CD14-positive monocyte (primary cell): ENCODE measurements at regions of chr12 and their contacts with region 1.

Region 1: GRCh38 chr12:53220801-53221202 is 11.2 kb downstream of the RARG start:
- DNase-seq: peak; percentile 89 to 94 (median 93)
- H3K4me3 ChIP-seq: peak overlapping the region; percentile 68 to 97 (median 84)
- H3K4me3 Mint-ChIP-seq: peak overlapping the region; percentile 91 to 94
- H3K27ac ChIP-seq: peak overlapping the region; percentile 98 to 99
- H3K27ac Mint-ChIP-seq: peak overlapping the region; percentile 97 to 100 (median 99)
- H3K4me1 ChIP-seq: peaks cover 69 to 85% of the 10 kb centered on the region in 2 donors
- H3K4me1 Mint-ChIP-seq: peaks cover 75% of the 10 kb centered on the region
- H3K27me3 ChIP-seq: no peaks in the 10 kb centered on the region
- H3K27me3 Mint-ChIP-seq: peaks cover 3 to 18% (median 9%) of the 10 kb centered on the region in 3 donors
- CTCF ChIP-seq: no peak

Region 2: DNA sequence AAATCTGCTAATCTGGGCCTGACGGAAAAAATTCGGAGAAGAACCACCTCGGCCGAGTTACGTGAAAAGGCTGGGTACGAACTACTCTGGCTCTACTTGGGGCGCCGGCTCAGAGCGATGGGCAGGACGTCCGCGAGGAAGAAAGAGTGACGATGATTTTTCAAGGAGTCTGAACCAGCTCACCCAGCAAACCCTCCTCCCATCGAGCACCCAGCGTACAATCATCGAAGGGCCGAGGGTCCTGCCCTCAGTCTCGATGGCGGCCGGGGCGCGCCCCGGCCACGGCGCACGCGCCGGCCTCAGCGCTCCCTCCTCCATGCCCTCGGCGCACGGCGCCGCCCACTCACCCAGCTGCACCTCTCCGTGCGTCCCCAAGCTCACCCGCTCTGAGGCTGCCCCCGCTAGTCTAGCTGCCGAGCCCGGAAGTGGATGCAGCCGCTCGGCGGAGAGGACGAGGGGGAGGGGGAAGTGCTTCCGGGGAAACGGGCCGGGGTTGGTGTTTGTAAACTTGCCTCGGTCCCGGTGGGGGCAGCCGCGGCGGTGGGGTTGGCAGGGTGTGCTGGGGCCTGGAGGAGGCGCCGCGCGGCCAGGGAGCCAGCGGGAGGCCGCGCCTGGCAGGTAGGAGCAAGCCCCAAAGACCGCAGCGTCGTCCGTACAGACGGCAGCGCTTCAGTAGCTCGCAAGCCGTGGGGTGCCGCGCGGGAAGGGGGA is 40.4 kb before region 1 on chr12 and contains the starts of genes CSAD and ZNF740:
- intact Hi-C with region 1: no loop called
- DNase-seq: peak; percentile 93 to 95 (median 93)
- H3K4me3 ChIP-seq: peak within 1 kb of the TSS; percentile 80 to 90 (median 84)
- H3K4me3 Mint-ChIP-seq: peak within 1 kb of the TSS; percentile 93 to 95
- H3K27ac ChIP-seq: peak within 1 kb of the TSS; percentile 89
- H3K27ac Mint-ChIP-seq: peak within 1 kb of the TSS; percentile 89 to 95 (median 94)
- H3K4me1 ChIP-seq: peaks cover 34 to 43% of the 10 kb centered on the region in 2 donors
- H3K4me1 Mint-ChIP-seq: peaks cover 43% of the 10 kb centered on the region
- H3K27me3 ChIP-seq: no peaks in the 10 kb centered on the region
- H3K27me3 Mint-ChIP-seq: no peaks in the 10 kb centered on the region
- CTCF ChIP-seq: no peak
- polyA plus RNA-seq, gene CSAD: 1.3 to 145 (median 1.4) TPM
- polyA plus RNA-seq, gene ZNF740: 0.74 to 15.4 (median 1.3) TPM

Region 3: GRCh38 chr12:53251477-53252348 is 30.9 kb after region 1 on chr12:
- intact Hi-C with region 1: loop called (anchors 2 to 5 kb)
- DNase-seq: peak; percentile 54 to 71 (median 69)
- H3K4me3 ChIP-seq: peak overlapping the region; percentile 72 to 98 (median 90)
- H3K4me3 Mint-ChIP-seq: peak overlapping the region; percentile 94 to 98
- H3K27ac ChIP-seq: peak overlapping the region; percentile 59 to 93
- H3K27ac Mint-ChIP-seq: peak overlapping the region; percentile 84 to 97 (median 94)
- H3K4me1 ChIP-seq: peaks cover 30 to 45% of the 10 kb centered on the region in 2 donors
- H3K4me1 Mint-ChIP-seq: peaks cover 43% of the 10 kb centered on the region
- H3K27me3 ChIP-seq: no peaks in the 10 kb centered on the region
- H3K27me3 Mint-ChIP-seq: no peaks in the 10 kb centered on the region
- CTCF ChIP-seq: peak; percentile 45

Region 4: GRCh38 chr12:53267999-53268647 is 47.3 kb after region 1 on chr12 and contains the start of gene ESPL1:
- intact Hi-C with region 1: loop called in 1 of 2 experiments (anchors 5 kb)
- DNase-seq: peak; percentile 52 to 80 (median 55)
- H3K4me3 ChIP-seq: peak within 1 kb of the TSS; percentile 72 to 96 (median 85)
- H3K4me3 Mint-ChIP-seq: peak within 1 kb of the TSS; percentile 98 to 99
- H3K27ac ChIP-seq: peak within 1 kb of the TSS; percentile 49 to 84
- H3K27ac Mint-ChIP-seq: peak within 1 kb of the TSS; percentile 87 to 97 (median 92)
- H3K4me1 ChIP-seq: peaks cover 29 to 34% of the 10 kb centered on the region in 2 donors
- H3K4me1 Mint-ChIP-seq: peaks cover 38% of the 10 kb centered on the region
- H3K27me3 ChIP-seq: no peaks in the 10 kb centered on the region
- H3K27me3 Mint-ChIP-seq: no peaks in the 10 kb centered on the region
- CTCF ChIP-seq: no peak
- polyA plus RNA-seq, gene ESPL1: 0.79 TPM in 1 of 3 donors, not detected in the others

Region 5: DNA sequence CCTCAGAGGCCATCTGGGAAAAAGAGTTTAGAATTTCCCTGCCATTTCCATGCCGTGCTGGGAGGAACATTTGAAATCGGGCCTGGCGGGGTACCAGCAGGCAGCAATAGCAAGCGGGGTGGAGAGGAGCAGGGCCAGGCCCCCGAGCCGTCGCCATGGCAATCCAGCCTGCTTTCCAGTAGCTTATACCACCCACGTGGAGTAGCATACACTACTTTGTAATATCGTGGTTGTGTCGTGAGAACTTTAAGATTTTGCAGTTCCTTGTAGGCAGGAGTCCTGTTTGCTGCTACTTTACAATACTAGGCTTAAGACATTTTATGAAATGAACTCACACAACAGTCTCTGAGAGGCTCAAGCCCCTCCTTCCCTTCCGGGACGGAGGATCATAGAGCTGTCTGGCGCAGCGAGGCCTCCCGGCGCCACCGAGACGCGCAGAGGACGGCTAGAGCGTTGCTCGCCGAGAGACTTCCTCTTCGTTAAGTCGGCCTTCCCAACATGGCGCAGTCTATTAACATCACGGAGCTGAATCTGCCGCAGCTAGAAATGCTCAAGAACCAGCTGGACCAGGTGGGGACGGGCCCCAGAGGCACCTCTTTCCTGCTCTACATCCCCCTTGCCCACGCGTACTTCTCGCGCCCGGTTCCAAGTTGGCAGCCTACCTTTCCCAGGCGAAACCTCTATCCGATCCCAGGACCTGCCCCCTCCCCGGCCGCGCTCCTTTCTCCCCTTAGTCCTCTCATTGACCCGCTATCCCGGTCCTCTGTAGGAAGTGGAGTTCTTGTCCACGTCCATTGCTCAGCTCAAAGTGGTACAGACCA is 74.5 kb after region 1 on chr12 and contains the start of gene PFDN5:
- intact Hi-C with region 1: loop called in 1 of 2 experiments (anchors 2 kb)
- DNase-seq: peak; percentile 79 to 87 (median 80)
- H3K4me3 ChIP-seq: peak within 1 kb of the TSS; percentile 96 to 97 (median 97)
- H3K4me3 Mint-ChIP-seq: peak within 1 kb of the TSS; percentile 96 to 97
- H3K27ac ChIP-seq: peak within 1 kb of the TSS; percentile 78 to 97
- H3K27ac Mint-ChIP-seq: peak within 1 kb of the TSS; percentile 96 to 100 (median 99)
- H3K4me1 ChIP-seq: peaks cover 50 to 53% of the 10 kb centered on the region in 2 donors
- H3K4me1 Mint-ChIP-seq: peaks cover 50% of the 10 kb centered on the region
- H3K27me3 ChIP-seq: no peaks in the 10 kb centered on the region
- H3K27me3 Mint-ChIP-seq: peaks cover 0 to 2% (median 0%) of the 10 kb centered on the region in 3 donors
- CTCF ChIP-seq: no peak
- polyA plus RNA-seq, gene PFDN5: 1,474 to 2,196 (median 1,751) TPM